Ovary (tissue), 10 donors: ENCODE measurements at regions of chr3 and their contacts with region 1.

Region 1: GRCh38 chr3:12878141-12878574 is 36.8 kb upstream of the RPL32 start:
- DNase-seq: no peak
- H3K4me3 ChIP-seq: no peak overlapping the region
- H3K27ac ChIP-seq: peak overlapping the region in 1 of 2 donors; percentile 28
- H3K4me1 ChIP-seq: peaks cover 27% of the 10 kb centered on the region
- H3K27me3 ChIP-seq: no peaks in the 10 kb centered on the region
- CTCF ChIP-seq: no peak
- EP300 ChIP-seq: no peak
- POLR2A ChIP-seq: no peak

Region 2: DNA sequence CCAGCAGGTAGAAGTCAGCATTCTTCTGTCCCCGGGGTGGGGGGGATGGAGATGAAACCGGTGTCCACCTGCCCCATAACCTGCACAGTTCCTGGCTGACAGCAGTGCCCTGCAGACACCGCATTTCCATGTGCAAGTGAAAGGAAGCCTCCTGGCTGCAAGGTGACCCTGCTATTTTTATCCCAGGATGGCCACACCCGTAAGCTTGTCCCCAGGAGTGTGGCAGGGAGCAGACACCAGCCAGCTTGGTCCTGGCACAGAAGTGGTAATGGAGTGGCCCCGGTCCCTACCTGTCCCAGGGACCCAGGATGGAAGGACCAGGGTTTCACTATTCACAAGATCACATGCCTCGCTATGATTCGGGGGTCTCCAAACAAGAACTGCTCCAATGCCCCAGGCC is 48.5 kb after region 1 on chr3:
- intact Hi-C with region 1: loop called in 1 of 4 experiments (anchors 1 kb)
- DNase-seq: no peak
- H3K4me3 ChIP-seq: no peak overlapping the region
- H3K27ac ChIP-seq: no peak overlapping the region
- H3K4me1 ChIP-seq: no peaks in the 10 kb centered on the region
- H3K27me3 ChIP-seq: no peaks in the 10 kb centered on the region
- CTCF ChIP-seq: no peak
- EP300 ChIP-seq: no peak
- POLR2A ChIP-seq: no peak